A549 (cell line): ENCODE measurements at regions of chr20 and their contacts with region 1.

Region 1: DNA sequence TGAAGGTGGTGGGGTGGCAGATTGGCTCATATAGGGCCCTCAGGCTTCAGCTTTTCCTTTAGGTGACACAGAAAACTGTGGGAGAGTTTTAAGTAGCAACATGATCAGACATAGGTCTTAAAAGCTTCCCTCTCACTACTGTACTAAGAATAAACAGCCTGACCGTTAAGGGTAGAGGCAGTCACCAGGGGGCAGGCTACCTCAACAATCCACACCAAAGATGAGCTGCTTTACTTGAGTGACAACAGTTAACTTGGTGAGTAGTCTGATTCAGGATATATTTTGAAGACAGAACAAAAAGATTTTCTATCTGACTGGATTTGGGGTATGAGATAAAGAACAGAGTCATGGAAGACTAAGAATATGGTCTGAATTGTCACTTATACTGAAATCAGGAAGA is 193.1 kb upstream of the SHLD1 start:
- DNase-seq: peak; percentile 67 to 78
- ATAC-seq: peak; percentile 91 to 97
- H3K4me3 ChIP-seq: no peak overlapping the region
- H3K27ac ChIP-seq: 0 out of 6 replicates have a peak overlapping the region, but pooled peaks of 1 of the 2 experiments have one; percentile 20
- H3K4me1 ChIP-seq: peaks cover 16% of the 10 kb centered on the region; the same call in 2 of the 3 replicates
- CTCF ChIP-seq: peak; percentile 91
- EP300 ChIP-seq: no peak
- POLR2A ChIP-seq: no peak
- RAD21 ChIP-seq: peak; percentile 86 to 94

Region 2: DNA sequence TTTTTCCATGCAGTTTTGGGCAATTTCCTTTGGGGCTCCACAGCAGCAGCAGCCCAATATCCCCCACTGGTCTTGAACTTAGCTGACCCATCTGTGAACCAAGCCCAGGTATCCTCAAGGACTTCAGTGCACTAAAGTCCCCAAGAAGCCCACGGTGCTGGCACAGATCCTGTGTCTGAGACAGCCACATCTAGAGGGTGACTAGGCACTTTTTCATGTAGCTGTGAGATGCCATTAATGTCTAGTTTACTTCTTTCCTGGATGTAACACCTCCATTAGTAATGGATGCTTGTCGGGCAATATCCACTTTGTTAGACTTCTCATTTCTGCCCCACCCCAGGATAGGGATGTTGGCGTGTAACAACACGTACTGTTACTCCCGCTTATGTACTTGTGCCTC is 64.2 kb before region 1 on chr20:
- CTCF ChIA-PET with region 1: no interaction called
- POLR2A ChIA-PET with region 1: no interaction called
- DNase-seq: no peak
- ATAC-seq: no peak
- H3K4me3 ChIP-seq: no peak overlapping the region
- H3K27ac ChIP-seq: no peak overlapping the region
- H3K4me1 ChIP-seq: no peaks in the 10 kb centered on the region
- CTCF ChIP-seq: no peak
- EP300 ChIP-seq: no peak
- POLR2A ChIP-seq: no peak
- RAD21 ChIP-seq: no peak

Region 3: GRCh38 chr20:5535125-5535771 is 21.9 kb before region 1 on chr20:
- CTCF ChIA-PET with region 1: interaction called, 56 read pairs
- POLR2A ChIA-PET with region 1: no interaction called
- DNase-seq: peak in 1 of 2 experiments; percentile 60
- ATAC-seq: peak; percentile 26 to 44; a peak in 5 of 6 replicates
- H3K4me3 ChIP-seq: no peak overlapping the region
- H3K27ac ChIP-seq: peak overlapping the region; percentile 47 to 65; a peak in 5 of 6 replicates
- H3K4me1 ChIP-seq: peaks cover 22% of the 10 kb centered on the region
- CTCF ChIP-seq: no peak
- EP300 ChIP-seq: no peak
- POLR2A ChIP-seq: no peak
- RAD21 ChIP-seq: no peak

Region 4: GRCh38 chr20:5543385-5543784 is 13.7 kb before region 1 on chr20:
- CTCF ChIA-PET with region 1: interaction called, 13 read pairs
- POLR2A ChIA-PET with region 1: no interaction called
- DNase-seq: no peak
- ATAC-seq: no peak
- H3K4me3 ChIP-seq: no peak overlapping the region
- H3K27ac ChIP-seq: no peak overlapping the region
- H3K4me1 ChIP-seq: no peaks in the 10 kb centered on the region
- CTCF ChIP-seq: no peak
- EP300 ChIP-seq: no peak
- POLR2A ChIP-seq: no peak
- RAD21 ChIP-seq: no peak

Region 5: GRCh38 chr20:5569021-5569420 is 11.9 kb after region 1 on chr20:
- CTCF ChIA-PET with region 1: interaction called, 34 read pairs
- POLR2A ChIA-PET with region 1: no interaction called
- DNase-seq: peak; percentile 52 to 75
- ATAC-seq: peak; percentile 86 to 87
- H3K4me3 ChIP-seq: no peak overlapping the region
- H3K27ac ChIP-seq: peak overlapping the region; percentile 10 to 61; a peak in 3 of 6 replicates
- H3K4me1 ChIP-seq: peaks cover 12% of the 10 kb centered on the region; the same call in 2 of the 3 replicates
- CTCF ChIP-seq: peak; percentile 87
- EP300 ChIP-seq: no peak
- POLR2A ChIP-seq: no peak
- RAD21 ChIP-seq: peak; percentile 94 to 97

Region 6: DNA sequence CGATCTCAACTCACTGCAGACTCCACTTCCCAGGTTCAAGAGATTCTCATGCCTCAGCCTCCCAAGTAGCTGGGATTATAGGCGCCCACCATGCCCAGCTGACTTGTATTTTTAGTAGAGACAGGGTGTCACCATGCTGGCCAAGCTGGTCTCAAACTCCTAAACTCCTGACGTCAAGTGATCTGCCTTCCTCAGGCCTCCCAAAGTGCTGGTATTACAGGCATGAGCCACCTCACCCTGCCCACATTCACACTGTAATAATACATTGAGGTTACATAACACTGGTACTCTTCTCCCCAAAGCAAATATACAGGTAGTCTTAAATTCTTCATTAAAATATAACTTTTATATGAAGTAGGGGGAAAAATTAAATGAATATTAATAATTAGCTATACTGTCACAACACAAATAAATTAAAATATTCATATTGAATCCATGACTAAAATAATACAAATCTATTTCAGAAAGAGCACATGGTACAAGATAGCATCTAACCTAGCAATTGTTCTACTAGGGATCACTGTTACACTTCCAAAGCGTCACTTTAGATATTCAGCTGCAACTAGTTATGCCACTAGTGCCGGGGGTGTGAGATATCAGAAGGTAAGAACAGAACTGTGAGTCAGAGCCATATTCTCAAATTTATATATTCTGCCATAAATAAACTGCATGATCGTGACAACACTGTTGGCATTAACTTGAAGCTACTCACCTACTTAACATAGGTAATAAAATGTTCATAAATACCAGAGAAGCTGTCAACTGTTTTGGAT is 24.0 kb after region 1 on chr20:
- CTCF ChIA-PET with region 1: interaction called, 10 read pairs
- POLR2A ChIA-PET with region 1: no interaction called
- DNase-seq: no peak
- ATAC-seq: peak in 1 of 2 experiments; percentile 12; a peak in 1 of 6 replicates
- H3K4me3 ChIP-seq: no peak overlapping the region
- H3K27ac ChIP-seq: no peak overlapping the region
- H3K4me1 ChIP-seq: peaks cover 7% of the 10 kb centered on the region; the same call in 2 of the 3 replicates
- CTCF ChIP-seq: no peak
- EP300 ChIP-seq: no peak
- POLR2A ChIP-seq: no peak
- RAD21 ChIP-seq: no peak

Region 7: GRCh38 chr20:5933802-5934436 is 376.8 kb after region 1 on chr20:
- CTCF ChIA-PET with region 1: interaction called, 39 read pairs
- POLR2A ChIA-PET with region 1: no interaction called
- DNase-seq: peak; percentile 41 to 48
- ATAC-seq: peak; percentile 81 to 83
- H3K4me3 ChIP-seq: no peak overlapping the region
- H3K27ac ChIP-seq: no peak overlapping the region
- H3K4me1 ChIP-seq: no peaks in the 10 kb centered on the region
- CTCF ChIP-seq: peak; percentile 72
- EP300 ChIP-seq: no peak
- POLR2A ChIP-seq: no peak
- RAD21 ChIP-seq: peak; percentile 73 to 84